MCF 10A (cell line): ENCODE measurements at regions of chr12 and their contacts with region 1.

Region 1: GRCh38 chr12:114668151-114668885 is 15.7 kb downstream of the TBX3 start:
- DNase-seq: peak; percentile 92
- H3K4me3 Mint-ChIP-seq: peak overlapping the region; percentile 72
- H3K27ac Mint-ChIP-seq: no peak overlapping the region
- H3K4me1 Mint-ChIP-seq: peaks cover 7% of the 10 kb centered on the region
- H3K27me3 Mint-ChIP-seq: no peaks in the 10 kb centered on the region
- CTCF ChIP-seq: peak; percentile 64

Region 2: DNA sequence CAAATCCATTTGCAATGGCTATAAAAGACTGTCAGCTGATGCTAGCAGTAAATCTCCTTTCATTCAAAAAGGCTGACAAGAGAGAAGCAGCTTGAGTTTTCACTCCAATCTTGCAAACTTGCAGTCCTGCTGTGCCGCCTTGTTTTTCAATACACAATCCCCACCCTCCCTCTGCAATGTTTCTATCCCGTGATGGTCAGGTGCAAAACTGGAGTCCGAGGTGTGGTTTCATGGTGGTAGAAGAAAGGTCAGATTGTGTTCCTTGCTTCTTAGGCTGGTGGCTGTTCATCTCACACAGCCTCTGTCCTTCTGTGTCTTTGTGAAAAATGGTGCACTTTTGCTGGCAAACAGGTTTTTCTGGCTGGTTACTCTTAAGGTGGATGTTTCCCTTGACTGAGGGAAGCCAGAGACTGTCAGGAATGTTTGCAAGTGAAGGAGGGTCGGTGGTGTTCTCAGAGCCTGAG is 43.4 kb after region 1 on chr12:
- CTCF ChIA-PET with region 1: no interaction called
- POLR2A ChIA-PET with region 1: no interaction called
- intact Hi-C with region 1: no loop called
- DNase-seq: no peak
- H3K4me3 Mint-ChIP-seq: no peak overlapping the region
- H3K27ac Mint-ChIP-seq: no peak overlapping the region
- H3K4me1 Mint-ChIP-seq: no peaks in the 10 kb centered on the region
- H3K27me3 Mint-ChIP-seq: peaks cover 12% of the 10 kb centered on the region
- CTCF ChIP-seq: no peak

Region 3: DNA sequence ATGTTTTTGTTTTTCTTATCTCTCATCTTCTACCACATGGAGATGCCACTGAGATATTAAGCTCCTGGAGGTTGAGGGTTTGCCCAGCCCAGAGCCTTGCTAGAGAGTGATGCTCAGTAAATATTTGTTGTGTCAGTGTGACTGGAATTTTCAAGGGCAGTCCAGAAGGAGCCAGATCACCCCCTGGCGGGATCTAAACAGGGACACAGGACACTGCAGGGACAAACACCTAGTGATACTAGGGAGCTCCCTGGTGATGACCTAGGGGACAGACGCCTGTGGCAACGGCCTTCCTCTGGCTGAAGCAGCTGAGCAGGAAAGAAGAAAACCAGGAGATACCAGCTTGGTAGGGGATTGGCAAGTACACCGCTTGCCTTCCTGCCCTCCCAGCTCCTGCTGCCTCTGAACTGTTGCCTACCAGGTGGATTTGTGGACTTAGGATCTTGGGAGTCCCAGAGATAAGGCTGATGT is 730.0 kb after region 1 on chr12:
- CTCF ChIA-PET with region 1: interaction called, 8 read pairs
- POLR2A ChIA-PET with region 1: no interaction called
- intact Hi-C with region 1: loop called (anchors 1 kb)
- DNase-seq: peak; percentile 32
- H3K4me3 Mint-ChIP-seq: no peak overlapping the region
- H3K27ac Mint-ChIP-seq: no peak overlapping the region
- H3K4me1 Mint-ChIP-seq: no peaks in the 10 kb centered on the region
- H3K27me3 Mint-ChIP-seq: peaks cover 10% of the 10 kb centered on the region
- CTCF ChIP-seq: peak; percentile 36

Region 4: GRCh38 chr12:115456946-115457689 is 788.8 kb after region 1 on chr12:
- CTCF ChIA-PET with region 1: no interaction called
- POLR2A ChIA-PET with region 1: no interaction called
- intact Hi-C with region 1: loop called (anchors 1 kb)
- DNase-seq: peak; percentile 20
- H3K4me3 Mint-ChIP-seq: no peak overlapping the region
- H3K27ac Mint-ChIP-seq: no peak overlapping the region
- H3K4me1 Mint-ChIP-seq: no peaks in the 10 kb centered on the region
- H3K27me3 Mint-ChIP-seq: peaks cover 10% of the 10 kb centered on the region
- CTCF ChIP-seq: no peak

Region 5: GRCh38 chr12:115632308-115632707 is 964.0 kb after region 1 on chr12:
- CTCF ChIA-PET with region 1: interaction called, 7 read pairs
- POLR2A ChIA-PET with region 1: no interaction called
- intact Hi-C with region 1: loop called (anchors 1 kb)
- DNase-seq: peak; percentile 38
- H3K4me3 Mint-ChIP-seq: no peak overlapping the region
- H3K27ac Mint-ChIP-seq: no peak overlapping the region
- H3K4me1 Mint-ChIP-seq: peaks cover 10% of the 10 kb centered on the region
- H3K27me3 Mint-ChIP-seq: no peaks in the 10 kb centered on the region
- CTCF ChIP-seq: peak; percentile 46